ENCODE measurements at regions of chr14 and their contacts with region 1.

Region 1: GRCh38 chr14:55707365-55707804 is 127.4 kb downstream of the KTN1 start:
- DNase-seq: no peak
- ATAC-seq: peak in 1 of 2 donors; percentile 44
- H3K4me3 ChIP-seq: no peak overlapping the region
- H3K27ac ChIP-seq: no peak overlapping the region
- H3K4me1 ChIP-seq: no peaks in the 10 kb centered on the region
- H3K27me3 ChIP-seq: no peaks in the 10 kb centered on the region

Region 2: GRCh38 chr14:55819610-55820304 is 112.4 kb after region 1 on chr14:
- intact Hi-C with region 1: no loop called
- DNase-seq: no peak
- ATAC-seq: no peak
- H3K4me3 ChIP-seq: no peak overlapping the region
- H3K27ac ChIP-seq: no peak overlapping the region
- H3K4me1 ChIP-seq: no peaks in the 10 kb centered on the region
- H3K27me3 ChIP-seq: no peaks in the 10 kb centered on the region

Region 3: DNA sequence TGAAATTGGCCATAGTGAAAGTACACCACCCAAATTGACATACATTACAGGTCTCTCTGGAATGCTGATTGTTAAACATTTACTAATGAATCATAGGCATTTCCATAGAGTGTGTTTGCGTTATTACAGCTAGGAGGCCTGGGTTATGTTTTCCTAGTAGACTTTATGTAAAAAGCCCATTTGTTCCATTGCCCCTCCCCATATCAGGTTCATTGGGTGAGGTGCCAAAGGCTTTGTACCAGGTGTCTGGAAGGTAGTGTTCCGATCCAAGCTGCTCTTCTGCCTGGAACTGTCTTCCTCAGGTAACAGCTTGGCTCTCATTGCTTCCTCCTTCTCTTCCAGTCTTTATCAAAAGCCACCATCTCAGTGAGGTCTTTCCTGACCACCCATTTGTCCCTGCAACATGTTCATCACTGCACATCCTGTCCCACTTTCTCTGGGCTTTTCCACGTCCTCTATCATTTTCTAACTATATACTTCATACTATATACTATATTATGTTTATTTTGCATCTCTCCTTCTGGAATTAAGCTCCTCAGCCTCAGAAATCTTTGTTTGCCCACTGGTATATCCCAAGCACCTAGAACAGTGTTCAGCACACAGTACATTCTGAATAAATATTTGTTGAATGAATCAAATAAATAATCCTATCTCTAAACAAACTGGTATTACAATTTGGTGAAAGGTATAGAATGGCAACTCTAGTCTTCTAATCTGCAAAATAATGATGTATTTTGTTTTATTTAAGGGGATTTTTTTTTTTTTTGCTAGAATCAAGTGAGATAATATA is 124.9 kb after region 1 on chr14:
- intact Hi-C with region 1: no loop called
- DNase-seq: no peak
- ATAC-seq: no peak
- H3K4me3 ChIP-seq: no peak overlapping the region
- H3K27ac ChIP-seq: no peak overlapping the region
- H3K4me1 ChIP-seq: no peaks in the 10 kb centered on the region
- H3K27me3 ChIP-seq: no peaks in the 10 kb centered on the region

Region 4: DNA sequence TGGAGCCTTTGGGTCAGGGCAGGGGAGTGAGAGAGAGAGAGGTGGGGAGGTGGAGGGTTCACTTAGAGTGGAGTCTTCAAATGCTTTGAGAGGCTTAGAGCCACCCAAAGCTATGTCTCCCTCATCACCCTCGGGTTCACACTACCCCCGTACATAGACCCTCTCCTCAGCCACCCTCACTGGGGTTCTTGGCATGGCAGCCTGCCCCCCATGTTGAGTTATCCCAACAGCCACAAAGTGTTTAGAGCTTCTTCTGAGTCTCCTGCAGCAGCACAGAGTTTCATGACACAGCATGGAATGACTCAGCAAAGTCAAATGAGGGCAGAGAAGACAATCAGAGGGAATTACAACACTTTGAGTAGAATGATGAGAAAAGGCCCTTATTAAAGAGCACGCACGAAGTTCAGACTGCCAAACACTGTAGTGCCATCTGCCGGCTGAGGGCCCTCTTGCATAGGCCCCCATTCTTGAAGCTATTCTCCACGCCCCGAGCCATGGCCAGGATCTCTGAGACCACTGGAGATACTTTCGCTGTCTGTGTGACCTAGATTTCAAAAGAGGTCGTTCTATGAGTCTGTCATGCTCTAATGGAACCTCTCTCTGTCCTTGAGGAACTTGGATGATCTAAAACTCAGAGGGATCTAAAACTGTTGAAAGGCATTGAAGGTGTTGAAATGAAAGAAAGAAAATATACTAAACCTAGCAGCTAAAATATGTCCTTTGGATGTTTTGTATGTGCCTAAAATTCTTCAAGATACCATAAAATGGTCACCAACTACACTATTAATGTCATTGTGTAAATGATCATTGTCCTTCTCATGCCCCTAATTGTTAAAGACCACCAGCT is 632.7 kb after region 1 on chr14:
- intact Hi-C with region 1: loop called in 1 of 4 experiments (anchors 10 kb)
- DNase-seq: peak; percentile 78 to 94 (median 88)
- ATAC-seq: peak; percentile 92 to 93
- H3K4me3 ChIP-seq: no peak overlapping the region
- H3K27ac ChIP-seq: no peak overlapping the region
- H3K4me1 ChIP-seq: peaks cover 1% of the 10 kb centered on the region
- H3K27me3 ChIP-seq: no peaks in the 10 kb centered on the region

Region 5: DNA sequence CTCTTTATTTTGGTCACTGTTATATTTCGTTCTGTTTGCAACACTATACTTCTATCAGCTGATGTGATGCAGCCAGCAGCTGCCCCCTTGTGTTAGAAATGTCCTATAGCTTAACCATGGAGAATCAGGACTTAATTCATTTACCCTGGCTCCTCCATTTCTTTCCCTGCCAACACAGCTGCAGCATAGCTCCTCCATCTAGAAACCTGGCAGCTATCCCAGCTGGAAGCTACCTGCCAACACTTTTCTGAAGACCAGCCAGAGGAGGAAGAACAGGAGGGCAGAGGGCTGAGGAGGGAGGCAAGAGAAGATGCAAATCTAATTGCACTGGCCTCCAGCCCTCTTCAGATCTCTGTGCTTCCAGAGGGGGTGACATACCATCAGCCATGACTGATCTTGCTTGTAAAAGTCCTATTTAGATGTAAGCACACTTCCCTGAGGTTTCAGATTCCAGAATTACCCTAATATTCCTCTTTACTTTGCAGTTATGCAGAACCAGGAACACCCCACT is 715.4 kb after region 1 on chr14:
- intact Hi-C with region 1: loop called in 1 of 4 experiments (anchors 5 kb)
- DNase-seq: peak; percentile 33 to 67 (median 51)
- ATAC-seq: peak; percentile 90 to 92
- H3K4me3 ChIP-seq: no peak overlapping the region
- H3K27ac ChIP-seq: no peak overlapping the region
- H3K4me1 ChIP-seq: no peaks in the 10 kb centered on the region
- H3K27me3 ChIP-seq: no peaks in the 10 kb centered on the region